PC-9 (cell line): ENCODE measurements at regions of chr1 and their contacts with region 1.

Region 1: DNA sequence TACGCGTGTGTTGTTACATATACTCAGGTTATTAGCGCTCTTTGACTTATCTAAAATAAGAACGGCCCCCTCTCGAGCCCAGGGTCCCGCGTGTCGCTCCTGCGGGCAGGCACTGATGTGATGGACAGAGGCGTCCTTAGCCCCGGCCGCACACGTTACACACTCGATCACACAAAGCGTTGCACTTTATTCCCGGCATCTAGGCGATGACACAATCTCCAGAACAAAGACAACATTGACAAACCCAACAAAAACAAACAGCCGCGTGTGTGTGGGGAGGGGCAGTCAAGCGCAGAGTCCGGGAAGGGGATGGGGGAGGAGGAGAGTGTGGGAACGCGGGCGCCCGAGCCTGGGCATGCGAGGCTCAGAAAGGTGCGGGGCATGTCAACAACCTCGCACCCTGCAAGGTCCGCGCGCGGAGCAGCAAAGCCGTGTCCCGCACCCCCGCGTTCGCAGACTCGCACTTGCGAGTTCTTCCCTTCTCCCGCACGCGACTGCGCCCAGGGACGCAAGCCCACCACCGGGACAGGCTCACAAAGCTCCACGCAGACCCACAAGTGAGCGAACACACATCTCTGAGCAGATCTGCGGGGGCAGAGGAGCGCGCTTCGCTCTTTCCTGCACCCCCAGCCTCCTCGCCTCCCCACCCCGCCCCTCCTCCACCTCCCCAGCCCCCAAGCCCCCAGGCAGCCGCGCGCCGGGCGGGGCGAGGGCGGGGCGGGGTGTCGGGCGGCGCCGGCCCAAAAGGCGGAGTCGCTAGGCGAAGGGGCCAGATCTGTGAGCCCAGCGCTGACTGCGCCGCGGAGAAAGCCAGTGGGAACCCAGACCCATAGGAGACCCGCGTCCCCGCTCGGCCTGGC is at the start of gene EFNA1:
- DNase-seq: peak; percentile 70 to 79
- H3K4me3 ChIP-seq: peak within 1 kb of the TSS; percentile 85
- H3K27ac ChIP-seq: peak within 1 kb of the TSS; percentile 98
- H3K4me1 ChIP-seq: peaks cover 59% of the 10 kb centered on the region
- H3K27me3 ChIP-seq: no peaks in the 10 kb centered on the region
- CTCF ChIP-seq: no peak
- total RNA-seq, gene EFNA1: 30.6 and 35.7 TPM in 2 replicates

Region 2: DNA sequence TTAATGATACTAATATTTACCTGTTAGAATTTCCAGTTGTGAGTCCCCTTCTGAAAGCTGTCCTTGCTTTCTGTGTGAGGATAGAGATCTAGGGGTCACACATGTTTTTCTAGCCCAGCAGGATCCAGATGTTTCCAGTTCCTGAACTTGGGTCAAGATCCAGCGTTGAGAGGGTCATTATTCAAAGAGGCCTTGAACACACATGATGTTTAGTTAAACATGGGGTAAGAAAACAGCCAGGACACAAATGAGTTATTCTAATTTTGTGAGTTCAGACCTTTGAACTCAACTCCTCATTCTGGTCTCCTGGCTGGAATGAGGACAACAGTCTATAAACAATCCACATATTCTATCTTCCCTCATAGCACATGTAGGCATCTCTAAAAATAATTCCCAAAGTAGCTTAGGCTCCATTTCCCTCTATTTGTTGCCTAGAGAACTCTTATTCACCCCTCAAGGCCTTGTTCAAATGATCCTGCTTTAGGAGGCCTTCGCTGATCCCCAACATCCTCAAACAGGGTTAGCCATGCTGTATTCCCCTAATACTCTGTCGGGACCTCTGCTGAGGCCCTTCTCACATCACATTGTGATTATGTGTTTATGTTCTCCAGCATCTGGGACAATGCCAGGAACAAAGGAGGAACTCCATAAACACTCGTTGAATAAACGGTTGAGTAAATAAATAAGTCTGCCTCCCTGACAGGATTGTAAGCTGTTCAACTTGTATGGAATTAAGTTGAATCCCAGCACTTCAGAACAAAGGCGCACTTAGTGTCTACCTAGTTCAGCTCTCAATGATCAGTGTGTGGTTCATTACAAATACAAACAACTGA is 242.2 kb before region 1 on chr1:
- CTCF ChIA-PET with region 1: no interaction called
- POLR2A ChIA-PET with region 1: no interaction called
- intact Hi-C with region 1: no loop called
- DNase-seq: no peak
- H3K4me3 ChIP-seq: no peak overlapping the region
- H3K27ac ChIP-seq: no peak overlapping the region
- H3K4me1 ChIP-seq: no peaks in the 10 kb centered on the region
- H3K27me3 ChIP-seq: peaks cover 92% of the 10 kb centered on the region
- CTCF ChIP-seq: no peak

Region 3: GRCh38 chr1:155091071-155091709 is 36.1 kb before region 1 on chr1:
- CTCF ChIA-PET with region 1: interaction called, 3 read pairs
- POLR2A ChIA-PET with region 1: no interaction called
- intact Hi-C with region 1: loop called (anchors 2 kb)
- DNase-seq: peak; percentile 51 to 79
- H3K4me3 ChIP-seq: no peak overlapping the region
- H3K27ac ChIP-seq: no peak overlapping the region
- H3K4me1 ChIP-seq: 0 out of 2 replicates have a peak, but pooled peaks cover 7% of the 10 kb centered on the region
- H3K27me3 ChIP-seq: no peaks in the 10 kb centered on the region
- CTCF ChIP-seq: peak; percentile 97

Region 4: DNA sequence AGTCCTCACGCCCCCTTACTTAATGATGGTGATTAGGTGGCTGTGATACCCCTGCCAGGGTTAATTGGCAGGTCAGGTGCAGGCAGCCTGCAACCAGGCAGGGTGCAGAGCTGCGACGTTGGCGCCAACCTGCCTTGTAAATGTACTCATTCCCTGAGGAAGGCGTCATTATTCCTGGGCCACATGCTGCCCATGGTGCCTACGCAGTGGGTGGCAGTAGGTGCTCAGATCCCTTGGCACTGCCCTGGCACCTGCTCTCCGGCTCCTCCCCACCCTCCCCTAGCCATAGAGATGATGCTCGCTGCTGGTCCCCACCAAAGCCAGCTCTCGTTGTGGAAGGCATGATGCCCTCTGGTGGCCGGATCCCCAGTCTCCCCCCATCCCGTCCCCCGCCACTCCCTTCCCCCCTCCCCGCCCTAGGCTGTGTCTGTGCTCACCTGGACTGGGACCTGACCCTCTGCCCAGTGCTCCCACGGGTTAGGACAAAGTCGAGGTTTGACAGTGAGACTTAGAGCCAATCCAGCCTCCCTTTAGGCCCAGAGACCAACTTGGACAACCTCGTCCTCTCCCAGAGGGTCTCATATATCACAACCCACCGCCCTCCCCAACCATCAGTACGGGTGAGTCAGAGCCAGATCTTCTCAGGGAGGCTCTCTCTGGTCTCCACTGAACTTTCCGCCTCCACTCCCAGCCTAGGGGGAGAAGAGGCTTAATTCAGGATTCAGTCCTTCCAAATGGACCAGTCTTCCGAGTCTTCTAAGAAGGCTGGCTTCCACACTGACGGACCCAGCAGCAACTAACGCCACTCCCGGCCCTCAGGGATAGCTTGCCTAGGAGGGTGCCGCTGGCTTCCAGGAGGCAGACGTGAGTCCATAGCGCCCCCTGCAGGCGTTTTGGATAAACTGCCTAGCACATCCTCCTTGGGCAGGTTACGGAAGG is 40.1 kb after region 1 on chr1:
- CTCF ChIA-PET with region 1: interaction called, 13 read pairs
- POLR2A ChIA-PET with region 1: no interaction called
- intact Hi-C with region 1: loop called (anchors 2 kb)
- DNase-seq: peak; percentile 66 to 83
- H3K4me3 ChIP-seq: peak overlapping the region; percentile 33; the same call in 1 of the 2 replicates
- H3K27ac ChIP-seq: no peak overlapping the region
- H3K4me1 ChIP-seq: peaks cover 12% of the 10 kb centered on the region
- H3K27me3 ChIP-seq: no peaks in the 10 kb centered on the region
- CTCF ChIP-seq: peak; percentile 98

Region 5: GRCh38 chr1:155172732-155173477 is 45.6 kb after region 1 on chr1 and contains the start of gene KRTCAP2:
- CTCF ChIA-PET with region 1: interaction called, 5 read pairs
- POLR2A ChIA-PET with region 1: no interaction called
- intact Hi-C with region 1: loop called (anchors 2 kb)
- DNase-seq: peak; percentile 89 to 93
- H3K4me3 ChIP-seq: peak within 1 kb of the TSS; percentile 89
- H3K27ac ChIP-seq: peak within 1 kb of the TSS; percentile 59
- H3K4me1 ChIP-seq: peaks cover 30% of the 10 kb centered on the region
- H3K27me3 ChIP-seq: no peaks in the 10 kb centered on the region
- CTCF ChIP-seq: peak; percentile 94
- total RNA-seq, gene KRTCAP2: 112 and 156 TPM in 2 replicates

Region 6: GRCh38 chr1:156123356-156124196 is 996.2 kb after region 1 on chr1:
- CTCF ChIA-PET with region 1: no interaction called
- POLR2A ChIA-PET with region 1: interaction called, 11 read pairs
- intact Hi-C with region 1: no loop called
- DNase-seq: peak; percentile 94 to 95
- H3K4me3 ChIP-seq: peak overlapping the region; percentile 56
- H3K27ac ChIP-seq: peak overlapping the region; percentile 98
- H3K4me1 ChIP-seq: peaks cover 98% of the 10 kb centered on the region
- H3K27me3 ChIP-seq: no peaks in the 10 kb centered on the region
- CTCF ChIP-seq: peak; percentile 42; the same call in 1 of the 2 replicates